ENCODE measurements at regions of chr14 and their contacts with region 1.

Region 1: DNA sequence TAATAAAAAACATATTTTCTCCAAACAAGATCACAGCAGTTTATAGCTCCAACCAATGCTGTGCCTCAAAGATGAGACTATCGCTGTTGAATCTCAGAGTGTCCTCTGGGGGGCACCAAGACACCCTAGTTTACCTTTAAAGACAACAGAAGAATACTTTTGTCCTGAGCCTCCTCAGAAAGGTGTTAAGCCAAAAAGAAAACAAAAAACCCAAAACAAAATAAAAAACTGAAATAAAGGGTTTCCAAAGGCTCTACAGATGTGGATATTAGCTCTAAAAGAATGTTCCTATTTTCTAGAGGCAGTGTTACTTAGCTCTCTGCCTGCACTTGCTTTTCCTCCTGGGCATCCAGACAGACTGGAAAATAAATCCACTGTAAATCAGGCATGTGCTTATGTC is 86.9 kb upstream of the TTC7B start:
- DNase-seq: peak; percentile 77
- ATAC-seq: peak; percentile 86
- H3K4me3 Mint-ChIP-seq: no peak overlapping the region
- H3K27ac Mint-ChIP-seq: no peak overlapping the region
- H3K4me1 Mint-ChIP-seq: peaks cover 22% of the 10 kb centered on the region
- H3K27me3 Mint-ChIP-seq: no peaks in the 10 kb centered on the region

Region 2: GRCh38 chr14:90534091-90534837 is 368.8 kb before region 1 on chr14:
- CTCF ChIA-PET with region 1: no interaction called
- POLR2A ChIA-PET with region 1: no interaction called
- intact Hi-C with region 1: no loop called
- DNase-seq: peak; percentile 7
- ATAC-seq: no peak
- H3K4me3 Mint-ChIP-seq: no peak overlapping the region
- H3K27ac Mint-ChIP-seq: no peak overlapping the region
- H3K4me1 Mint-ChIP-seq: peaks cover 3% of the 10 kb centered on the region
- H3K27me3 Mint-ChIP-seq: no peaks in the 10 kb centered on the region

Region 3: GRCh38 chr14:90943367-90943766 is 40.3 kb after region 1 on chr14:
- CTCF ChIA-PET with region 1: interaction called, 10 read pairs
- POLR2A ChIA-PET with region 1: no interaction called
- intact Hi-C with region 1: no loop called
- DNase-seq: no peak
- ATAC-seq: no peak
- H3K4me3 Mint-ChIP-seq: no peak overlapping the region
- H3K27ac Mint-ChIP-seq: no peak overlapping the region
- H3K4me1 Mint-ChIP-seq: no peaks in the 10 kb centered on the region
- H3K27me3 Mint-ChIP-seq: no peaks in the 10 kb centered on the region

Region 4: GRCh38 chr14:91038438-91038837 is 135.3 kb after region 1 on chr14:
- CTCF ChIA-PET with region 1: interaction called, 3 read pairs
- POLR2A ChIA-PET with region 1: no interaction called
- intact Hi-C with region 1: loop called in 1 of 2 experiments (anchors 10 kb)
- DNase-seq: peak; percentile 24
- ATAC-seq: peak; percentile 41
- H3K4me3 Mint-ChIP-seq: no peak overlapping the region
- H3K27ac Mint-ChIP-seq: peak overlapping the region; percentile 49
- H3K4me1 Mint-ChIP-seq: peaks cover 64% of the 10 kb centered on the region
- H3K27me3 Mint-ChIP-seq: no peaks in the 10 kb centered on the region

Region 5: GRCh38 chr14:91114079-91115065 is 211.3 kb after region 1 on chr14:
- CTCF ChIA-PET with region 1: interaction called, 23 read pairs
- POLR2A ChIA-PET with region 1: no interaction called
- intact Hi-C with region 1: loop called in 1 of 2 experiments (anchors 5 kb)
- DNase-seq: peak; percentile 82
- ATAC-seq: peak; percentile 82
- H3K4me3 Mint-ChIP-seq: peak overlapping the region; percentile 99
- H3K27ac Mint-ChIP-seq: peak overlapping the region; percentile 99
- H3K4me1 Mint-ChIP-seq: peaks cover 70% of the 10 kb centered on the region
- H3K27me3 Mint-ChIP-seq: no peaks in the 10 kb centered on the region

Region 6: GRCh38 chr14:91138511-91139359 is 235.6 kb after region 1 on chr14:
- CTCF ChIA-PET with region 1: interaction called, 8 read pairs
- POLR2A ChIA-PET with region 1: no interaction called
- intact Hi-C with region 1: loop called in 1 of 2 experiments (anchors 1 kb)
- DNase-seq: peak; percentile 72
- ATAC-seq: peak; percentile 84
- H3K4me3 Mint-ChIP-seq: no peak overlapping the region
- H3K27ac Mint-ChIP-seq: peak overlapping the region; percentile 29
- H3K4me1 Mint-ChIP-seq: peaks cover 41% of the 10 kb centered on the region
- H3K27me3 Mint-ChIP-seq: no peaks in the 10 kb centered on the region

Region 7: GRCh38 chr14:91286530-91286937 is 383.4 kb after region 1 on chr14:
- CTCF ChIA-PET with region 1: interaction called, 7 read pairs
- POLR2A ChIA-PET with region 1: no interaction called
- intact Hi-C with region 1: loop called (anchors 1 kb)
- DNase-seq: peak; percentile 89
- ATAC-seq: peak; percentile 84
- H3K4me3 Mint-ChIP-seq: no peak overlapping the region
- H3K27ac Mint-ChIP-seq: peak overlapping the region; percentile 78
- H3K4me1 Mint-ChIP-seq: peaks cover 13% of the 10 kb centered on the region
- H3K27me3 Mint-ChIP-seq: no peaks in the 10 kb centered on the region

Measured in activated CD4-positive, alpha-beta T cell treated with anti-CD3 and anti-CD28 coated beads for 36 hours (primary cell).